Mammary epithelial cell (primary cell): ENCODE measurements at regions of chr17 and their contacts with region 1.

Region 1: DNA sequence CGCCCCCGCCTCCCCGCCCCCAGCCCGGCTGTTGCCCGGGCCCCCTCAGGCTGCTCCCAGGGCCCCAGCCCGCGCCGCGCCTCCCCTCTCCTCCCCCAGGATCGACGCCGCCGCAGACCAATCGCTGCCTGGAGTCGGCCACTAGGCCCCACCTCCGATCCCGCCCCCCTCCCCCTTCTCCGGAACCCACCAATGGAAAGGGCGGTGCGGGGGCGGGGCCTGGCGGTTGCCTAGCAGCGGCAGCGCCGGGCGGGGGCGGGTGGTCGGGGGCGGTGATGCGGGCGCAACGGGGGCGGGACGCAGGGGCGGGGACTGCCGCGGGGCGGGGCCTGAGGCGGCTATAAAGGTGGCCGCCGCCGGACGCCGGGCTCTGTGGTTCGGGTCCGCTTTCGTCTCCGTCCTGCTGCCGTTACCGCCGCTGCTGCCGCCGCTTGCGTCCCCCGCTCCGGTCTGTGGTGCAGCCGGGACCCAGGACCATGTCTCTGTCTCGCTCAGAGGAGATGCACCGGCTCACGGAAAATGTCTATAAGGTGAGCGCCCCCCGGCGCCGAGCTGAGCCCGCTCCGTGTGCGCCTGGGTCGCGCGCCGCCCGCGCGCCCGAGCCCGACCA is at the start of gene BAIAP2:
- DNase-seq: peak; percentile 87
- H3K4me3 ChIP-seq: peak within 1 kb of the TSS; percentile 70 to 80 (median 75)
- H3K27ac ChIP-seq: peak within 1 kb of the TSS; percentile 26
- H3K4me1 ChIP-seq: peaks cover 51% of the 10 kb centered on the region
- H3K27me3 ChIP-seq: no peaks in the 10 kb centered on the region
- CTCF ChIP-seq: no peak
- total RNA-seq, gene BAIAP2: 30.8 to 114 TPM

Region 2: DNA sequence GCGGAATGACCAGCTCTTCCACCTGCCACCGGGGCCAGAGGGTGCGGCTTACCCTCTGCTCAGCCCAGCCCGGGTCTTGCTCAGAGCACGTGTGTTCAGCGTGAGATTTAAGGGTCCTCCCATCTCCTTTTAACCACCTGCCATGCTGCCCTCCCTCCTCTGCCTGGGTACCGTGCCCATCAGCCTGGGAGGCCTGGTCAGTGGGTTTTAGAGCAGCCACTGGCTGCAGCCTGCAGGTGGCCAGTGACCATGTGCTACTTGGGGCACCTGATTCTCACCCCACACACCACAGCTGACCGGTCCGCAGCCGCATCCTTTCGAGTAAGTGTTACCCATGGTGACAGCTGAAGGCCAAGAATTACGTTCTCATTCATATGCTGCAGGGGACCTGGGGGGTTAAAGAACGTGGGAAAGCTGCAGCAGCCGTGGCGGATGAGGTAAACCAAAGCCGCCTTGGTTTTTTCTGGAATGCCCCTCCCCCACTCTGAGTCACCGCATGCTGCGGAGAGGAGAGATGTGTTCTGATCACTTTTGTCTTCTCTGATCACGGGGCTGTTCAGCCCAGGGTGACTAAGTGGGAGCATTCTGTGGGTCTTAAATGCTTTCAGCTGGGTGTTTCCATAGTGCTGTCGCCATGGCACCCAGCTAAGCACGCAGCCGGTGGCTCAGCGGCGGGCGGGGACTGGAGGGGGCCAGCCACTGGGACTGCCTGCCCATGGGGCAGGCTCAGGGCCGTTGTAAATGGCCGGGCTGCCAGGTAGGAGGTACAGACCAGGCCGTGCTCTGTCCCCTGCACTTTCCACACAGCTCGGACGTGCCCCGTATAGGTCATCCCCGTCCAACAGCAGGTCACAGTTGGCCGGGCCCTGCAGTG is 59.9 kb after region 1 on chr17:
- CTCF ChIA-PET with region 1: no interaction called
- dilution Hi-C with region 1: loop called (anchors 5 kb)
- in situ Hi-C with region 1: loop called in 1 of 2 experiments (anchors 5 kb)
- intact Hi-C with region 1: no loop called
- DNase-seq: peak; percentile 98
- H3K4me3 ChIP-seq: no peak overlapping the region
- H3K27ac ChIP-seq: peak overlapping the region; percentile 80
- H3K4me1 ChIP-seq: peaks cover 76% of the 10 kb centered on the region
- H3K27me3 ChIP-seq: no peaks in the 10 kb centered on the region
- CTCF ChIP-seq: peak in 1 of 2 donors; percentile 1

Region 3: GRCh38 chr17:81101614-81102306 is 66.9 kb after region 1 on chr17:
- CTCF ChIA-PET with region 1: no interaction called
- dilution Hi-C with region 1: no loop called
- in situ Hi-C with region 1: loop called in 1 of 2 experiments (anchors 5 kb)
- intact Hi-C with region 1: loop called (anchors 2 kb)
- DNase-seq: peak; percentile 63
- H3K4me3 ChIP-seq: no peak overlapping the region
- H3K27ac ChIP-seq: no peak overlapping the region
- H3K4me1 ChIP-seq: peaks cover 20% of the 10 kb centered on the region
- H3K27me3 ChIP-seq: no peaks in the 10 kb centered on the region
- CTCF ChIP-seq: peak; percentile 99 to 100